ENCODE measurements at regions of chr2 and their contacts with region 1.

Region 1: GRCh38 chr2:18253686-18254197 is 306.7 kb downstream of the RDH14 start:
- DNase-seq: no peak
- H3K4me3 Mint-ChIP-seq: no peak overlapping the region
- H3K27ac Mint-ChIP-seq: no peak overlapping the region
- H3K4me1 Mint-ChIP-seq: no peaks in the 10 kb centered on the region
- H3K27me3 Mint-ChIP-seq: no peaks in the 10 kb centered on the region

Region 2: GRCh38 chr2:18238209-18238608 is 15.5 kb before region 1 on chr2:
- CTCF ChIA-PET with region 1: no interaction called
- POLR2A ChIA-PET with region 1: no interaction called
- DNase-seq: no peak
- H3K4me3 Mint-ChIP-seq: no peak overlapping the region
- H3K27ac Mint-ChIP-seq: no peak overlapping the region
- H3K4me1 Mint-ChIP-seq: no peaks in the 10 kb centered on the region
- H3K27me3 Mint-ChIP-seq: peaks cover 2% of the 10 kb centered on the region

Region 3: GRCh38 chr2:18265614-18266587 is 12.2 kb after region 1 on chr2:
- CTCF ChIA-PET with region 1: no interaction called
- POLR2A ChIA-PET with region 1: no interaction called
- DNase-seq: no peak
- H3K4me3 Mint-ChIP-seq: no peak overlapping the region
- H3K27ac Mint-ChIP-seq: no peak overlapping the region
- H3K4me1 Mint-ChIP-seq: no peaks in the 10 kb centered on the region
- H3K27me3 Mint-ChIP-seq: no peaks in the 10 kb centered on the region

Region 4: GRCh38 chr2:18311420-18312195 is 57.9 kb after region 1 on chr2:
- CTCF ChIA-PET with region 1: no interaction called
- POLR2A ChIA-PET with region 1: interaction called, 17 read pairs
- DNase-seq: no peak
- H3K4me3 Mint-ChIP-seq: no peak overlapping the region
- H3K27ac Mint-ChIP-seq: no peak overlapping the region
- H3K4me1 Mint-ChIP-seq: peaks cover 2% of the 10 kb centered on the region
- H3K27me3 Mint-ChIP-seq: no peaks in the 10 kb centered on the region